ENCODE measurements at regions of chr5 and their contacts with region 1.

Region 1: DNA sequence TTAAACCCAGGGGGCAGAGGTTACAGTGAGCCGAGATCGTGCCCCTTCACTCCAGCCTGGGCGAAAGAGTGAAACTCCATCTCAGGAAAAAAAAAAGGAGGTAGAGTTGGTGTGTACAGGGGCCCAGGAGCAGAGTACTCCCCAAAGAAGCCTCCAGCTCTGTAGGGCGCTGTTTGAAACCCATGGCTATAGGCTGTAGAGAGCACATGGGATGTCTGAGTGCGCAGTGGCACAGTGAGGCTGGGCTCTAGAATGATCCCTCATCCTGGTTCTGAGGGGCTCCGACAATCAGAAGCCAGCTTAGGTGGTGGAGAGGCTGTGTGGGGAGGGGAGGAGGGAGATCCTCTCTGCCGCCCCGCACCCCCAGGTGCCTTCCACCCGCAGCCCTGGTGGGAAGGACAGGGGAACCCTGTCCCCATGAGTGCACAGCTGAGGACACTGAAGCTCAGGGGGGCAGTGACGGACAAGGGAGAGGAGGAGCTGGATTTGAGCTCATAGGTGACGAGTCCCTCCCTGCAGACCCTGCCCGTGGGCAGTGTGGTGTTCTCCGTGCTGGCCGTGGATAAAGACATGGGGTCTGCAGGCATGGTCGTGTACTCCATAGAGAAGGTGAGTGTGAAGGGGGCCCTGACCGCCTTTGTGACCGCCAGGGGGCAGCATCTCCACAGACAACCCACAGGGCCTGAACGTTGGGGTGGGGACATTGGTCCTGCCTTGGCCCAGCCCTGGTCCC is 24.6 kb downstream of the CDHR2 start:
- DNase-seq: peak; percentile 69 to 88 (median 87)
- ATAC-seq: peak; percentile 81 to 87
- H3K4me3 ChIP-seq: no peak overlapping the region
- H3K27ac ChIP-seq: no peak overlapping the region
- H3K4me1 ChIP-seq: no peaks in the 10 kb centered on the region
- H3K27me3 ChIP-seq: no peaks in the 10 kb centered on the region

Region 2: GRCh38 chr5:176492431-176492830 is 81.3 kb before region 1 on chr5:
- intact Hi-C with region 1: no loop called
- DNase-seq: no peak
- ATAC-seq: no peak
- H3K4me3 ChIP-seq: no peak overlapping the region
- H3K27ac ChIP-seq: no peak overlapping the region
- H3K4me1 ChIP-seq: no peaks in the 10 kb centered on the region
- H3K27me3 ChIP-seq: no peaks in the 10 kb centered on the region

Region 3: GRCh38 chr5:176629853-176630712 is 56.4 kb after region 1 on chr5 and contains the starts of genes EIF4E1B and SNCB:
- intact Hi-C with region 1: loop called in 1 of 4 experiments (anchors 10 kb)
- DNase-seq: peak in 2 of 3 donors; percentile 73 to 76
- ATAC-seq: peak; percentile 83
- H3K4me3 ChIP-seq: peak within 1 kb of the TSS; percentile 33
- H3K27ac ChIP-seq: no peak within 1 kb of the TSS
- H3K4me1 ChIP-seq: no peaks in the 10 kb centered on the region
- H3K27me3 ChIP-seq: no peaks in the 10 kb centered on the region
- total RNA-seq, gene EIF4E1B: not detected
- total RNA-seq, gene SNCB: 0.74 to 3.2 (median 0.88) TPM in 3 of 4 donors, not detected in the other

Region 4: GRCh38 chr5:176647030-176647866 is 73.5 kb after region 1 on chr5 and contains the start of gene TSPAN17:
- intact Hi-C with region 1: loop called in 1 of 4 experiments (anchors 2 kb)
- DNase-seq: peak; percentile 100
- ATAC-seq: peak; percentile 98 to 99
- H3K4me3 ChIP-seq: peak within 1 kb of the TSS; percentile 84
- H3K27ac ChIP-seq: peak within 1 kb of the TSS; percentile 75
- H3K4me1 ChIP-seq: peaks cover 1% of the 10 kb centered on the region
- H3K27me3 ChIP-seq: no peaks in the 10 kb centered on the region
- total RNA-seq, gene TSPAN17: 16.1 to 23.7 (median 18.8) TPM